MCF 10A (cell line): ENCODE measurements at regions of chr7 and their contacts with region 1.

Region 1: DNA sequence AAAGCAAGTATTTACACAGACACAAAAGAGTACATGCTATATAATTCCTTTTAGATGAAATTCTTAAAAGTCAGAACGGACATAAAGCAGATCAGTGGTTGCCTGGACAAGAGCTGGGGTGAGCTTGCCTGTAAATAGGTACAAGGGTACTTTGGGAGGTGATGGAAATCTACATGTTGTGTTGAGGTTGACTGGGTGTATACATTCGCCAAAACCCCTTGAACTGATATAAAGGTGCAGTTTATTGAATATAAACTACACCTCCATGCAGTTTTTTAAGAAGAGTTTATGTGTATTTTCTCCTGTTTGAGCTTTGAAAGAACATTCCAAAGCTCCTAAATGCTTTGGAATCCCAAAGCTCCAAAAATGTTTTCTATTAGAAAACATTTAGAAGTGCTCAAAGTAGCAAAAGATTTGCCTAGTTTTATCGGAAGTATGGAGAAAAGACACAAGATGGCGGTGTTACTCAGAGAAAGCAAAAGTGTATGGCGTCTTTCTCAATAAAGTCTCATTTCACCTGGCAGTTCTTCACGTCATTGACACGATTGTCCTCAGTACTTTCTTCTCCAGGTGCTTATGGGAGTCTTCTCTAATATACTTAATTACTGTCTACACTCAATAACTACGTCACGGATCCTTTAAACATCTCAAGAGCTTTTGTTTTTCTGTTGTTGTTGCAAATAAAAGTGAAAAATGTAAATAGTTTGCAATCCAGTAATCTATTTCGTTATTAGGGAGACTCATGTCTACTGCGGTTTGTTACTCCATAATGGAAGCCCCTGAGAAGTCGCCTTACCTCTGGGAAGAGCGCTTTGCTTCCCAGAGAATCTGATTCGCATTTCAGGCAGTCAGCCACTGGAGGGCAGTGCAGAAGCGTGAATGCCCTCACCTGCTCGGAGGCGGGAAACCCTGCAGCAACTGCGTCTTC is 14.7 kb upstream of the SEC61G start:
- DNase-seq: peak; percentile 90
- H3K4me3 Mint-ChIP-seq: peak overlapping the region; percentile 75
- H3K27ac Mint-ChIP-seq: peak overlapping the region; percentile 75
- H3K4me1 Mint-ChIP-seq: peaks cover 13% of the 10 kb centered on the region
- H3K27me3 Mint-ChIP-seq: no peaks in the 10 kb centered on the region
- CTCF ChIP-seq: peak; percentile 80

Region 2: DNA sequence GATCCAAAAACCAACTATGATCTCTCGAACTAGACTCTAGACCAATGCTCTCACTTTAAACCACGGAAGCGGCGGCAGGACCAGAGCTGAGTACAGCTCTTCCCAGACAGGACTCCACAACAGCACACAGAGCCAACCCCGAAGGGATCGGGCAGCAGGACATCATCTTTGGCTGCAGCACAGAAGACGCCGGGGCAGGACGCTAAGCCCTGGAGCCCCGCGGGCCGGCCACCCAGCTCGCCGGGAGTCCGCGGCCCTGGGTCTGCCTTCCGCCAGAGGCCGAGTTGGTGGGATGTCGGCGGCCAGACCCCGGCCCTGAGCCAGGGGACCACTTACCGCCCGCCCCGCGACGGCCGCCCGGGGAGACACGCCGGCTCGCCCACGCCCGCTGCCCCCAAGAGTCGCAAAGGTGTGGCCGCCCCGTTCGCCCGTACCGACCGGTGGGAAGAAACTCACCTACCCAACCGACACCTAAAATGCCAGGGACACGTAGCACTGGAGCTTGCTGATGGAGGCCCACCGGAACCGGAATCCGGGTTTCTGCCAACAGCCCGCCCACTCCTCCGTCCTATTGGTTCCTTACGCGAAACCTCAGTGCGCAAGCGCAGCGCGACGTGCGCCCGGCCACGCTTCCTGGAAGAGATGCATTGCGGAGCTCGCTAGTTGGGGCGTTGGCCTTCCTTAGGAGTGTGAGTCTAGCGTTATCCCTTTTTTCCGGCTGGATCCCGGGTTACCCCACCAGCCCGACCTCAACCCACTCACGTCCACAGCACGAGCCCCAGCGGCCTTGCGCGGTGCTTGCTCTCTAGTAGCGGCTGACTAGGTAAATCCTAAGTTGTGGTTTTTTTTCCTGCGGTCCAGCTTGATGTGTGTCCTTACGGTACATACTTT is 14.8 kb before region 1 on chr7 and contains the start of gene SEC61G:
- CTCF ChIA-PET with region 1: interaction called, 33 read pairs
- POLR2A ChIA-PET with region 1: interaction called, 12 read pairs
- intact Hi-C with region 1: no loop called
- DNase-seq: peak; percentile 97
- H3K4me3 Mint-ChIP-seq: peak within 1 kb of the TSS; percentile 94
- H3K27ac Mint-ChIP-seq: peak within 1 kb of the TSS; percentile 96
- H3K4me1 Mint-ChIP-seq: peaks cover 5% of the 10 kb centered on the region
- H3K27me3 Mint-ChIP-seq: no peaks in the 10 kb centered on the region
- CTCF ChIP-seq: no peak
- total RNA-seq, gene SEC61G: 246 and 490 TPM in 2 replicates

Region 3: DNA sequence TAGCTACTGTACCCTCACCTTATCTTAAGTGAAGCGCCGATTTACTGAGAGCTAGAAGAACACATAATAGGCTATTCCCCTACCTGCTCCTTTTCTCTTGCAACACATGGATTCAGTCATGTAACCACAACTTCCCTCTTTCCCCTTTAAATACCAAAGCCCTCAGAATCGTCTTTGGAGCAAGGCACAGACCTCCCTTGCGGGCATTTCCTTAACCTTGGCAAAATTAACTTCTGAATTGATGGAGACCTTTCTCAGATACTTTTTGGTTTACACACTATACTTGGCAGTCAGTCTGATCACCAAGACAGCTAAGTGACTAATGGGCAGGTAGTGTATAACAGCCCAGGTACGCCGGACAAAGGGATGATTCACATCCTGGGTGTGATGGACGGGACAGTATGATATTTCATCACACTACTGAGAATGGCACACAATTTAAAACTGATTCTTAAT is 57.9 kb after region 1 on chr7:
- CTCF ChIA-PET with region 1: interaction called, 90 read pairs
- POLR2A ChIA-PET with region 1: no interaction called
- intact Hi-C with region 1: loop called (anchors 2 kb)
- DNase-seq: peak; percentile 96
- H3K4me3 Mint-ChIP-seq: peak overlapping the region; percentile 28
- H3K27ac Mint-ChIP-seq: peak overlapping the region; percentile 61
- H3K4me1 Mint-ChIP-seq: peaks cover 21% of the 10 kb centered on the region
- H3K27me3 Mint-ChIP-seq: no peaks in the 10 kb centered on the region
- CTCF ChIP-seq: no peak

Region 4: DNA sequence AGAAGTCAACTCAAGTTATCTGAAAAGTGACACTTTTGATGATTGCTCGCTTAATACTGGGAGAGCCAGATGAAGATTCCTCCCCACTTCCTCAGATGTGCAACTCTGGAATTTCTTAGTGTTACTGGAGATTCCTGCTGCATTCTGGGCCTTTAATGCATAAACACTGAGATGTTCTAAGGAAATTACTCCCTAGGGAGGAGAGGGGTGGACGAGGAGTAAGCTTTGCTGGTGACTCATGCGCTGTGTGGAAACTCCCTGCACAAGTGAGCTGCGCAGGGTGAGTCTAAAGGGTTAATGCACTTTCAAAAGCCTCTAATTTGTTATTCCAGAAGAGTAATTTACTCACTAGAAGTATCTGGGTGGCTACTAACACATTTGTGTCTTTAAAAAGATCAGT is 291.3 kb after region 1 on chr7:
- CTCF ChIA-PET with region 1: interaction called, 9 read pairs
- POLR2A ChIA-PET with region 1: no interaction called
- intact Hi-C with region 1: loop called (anchors 5 kb)
- DNase-seq: peak; percentile 95
- H3K4me3 Mint-ChIP-seq: peak overlapping the region; percentile 63
- H3K27ac Mint-ChIP-seq: peak overlapping the region; percentile 93
- H3K4me1 Mint-ChIP-seq: peaks cover 81% of the 10 kb centered on the region
- H3K27me3 Mint-ChIP-seq: no peaks in the 10 kb centered on the region
- CTCF ChIP-seq: no peak

Region 5: GRCh38 chr7:55144333-55145317 is 370.9 kb after region 1 on chr7:
- CTCF ChIA-PET with region 1: interaction called, 21 read pairs
- POLR2A ChIA-PET with region 1: interaction called, 3 read pairs
- intact Hi-C with region 1: no loop called
- DNase-seq: no peak
- H3K4me3 Mint-ChIP-seq: no peak overlapping the region
- H3K27ac Mint-ChIP-seq: no peak overlapping the region
- H3K4me1 Mint-ChIP-seq: peaks cover 25% of the 10 kb centered on the region
- H3K27me3 Mint-ChIP-seq: no peaks in the 10 kb centered on the region
- CTCF ChIP-seq: peak; percentile 22

Region 6: GRCh38 chr7:55250313-55250712 is 476.6 kb after region 1 on chr7:
- CTCF ChIA-PET with region 1: interaction called, 309 read pairs
- POLR2A ChIA-PET with region 1: interaction called, 19 read pairs
- intact Hi-C with region 1: loop called (anchors 1 kb)
- DNase-seq: peak; percentile 66
- H3K4me3 Mint-ChIP-seq: no peak overlapping the region
- H3K27ac Mint-ChIP-seq: no peak overlapping the region
- H3K4me1 Mint-ChIP-seq: peaks cover 9% of the 10 kb centered on the region
- H3K27me3 Mint-ChIP-seq: peaks cover 12% of the 10 kb centered on the region
- CTCF ChIP-seq: peak; percentile 53

Region 7: DNA sequence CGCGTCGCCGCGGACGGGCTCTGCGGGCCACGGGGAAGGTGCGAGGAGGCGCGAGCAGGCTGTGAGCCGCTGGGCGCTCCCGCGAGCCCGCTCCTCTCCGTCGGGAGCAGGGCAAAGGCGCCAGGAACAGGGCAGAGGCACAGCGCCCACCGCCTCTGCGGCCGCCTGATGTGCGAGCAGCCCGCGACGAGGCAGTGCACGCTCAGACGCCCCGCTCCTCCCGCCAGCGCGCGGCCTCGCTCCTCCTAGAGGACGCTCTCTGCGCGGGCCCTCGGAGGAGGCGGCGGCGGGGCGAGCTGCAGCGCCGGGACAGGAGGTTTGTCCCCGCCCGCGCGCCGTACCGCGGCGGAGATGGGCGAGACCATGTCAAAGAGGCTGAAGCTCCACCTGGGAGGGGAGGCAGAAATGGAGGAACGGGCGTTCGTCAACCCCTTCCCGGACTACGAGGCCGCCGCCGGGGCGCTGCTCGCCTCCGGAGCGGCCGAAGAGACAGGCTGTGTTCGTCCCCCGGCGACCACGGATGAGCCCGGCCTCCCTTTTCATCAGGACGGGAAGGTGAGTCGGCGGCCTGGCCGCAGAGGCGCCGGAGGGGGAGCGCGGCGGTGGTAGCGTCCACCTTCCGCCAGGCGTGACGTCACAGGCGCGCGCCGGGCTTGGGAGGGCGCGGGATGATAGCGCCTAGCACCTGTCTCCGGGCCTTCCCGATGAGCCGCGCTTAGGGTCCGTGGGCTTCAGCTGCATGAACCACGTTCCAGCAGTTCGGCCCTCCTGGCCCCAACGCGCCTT is 592.1 kb after region 1 on chr7:
- CTCF ChIA-PET with region 1: no interaction called
- POLR2A ChIA-PET with region 1: no interaction called
- intact Hi-C with region 1: loop called (anchors 5 kb)
- DNase-seq: peak; percentile 96
- H3K4me3 Mint-ChIP-seq: peak overlapping the region; percentile 92
- H3K27ac Mint-ChIP-seq: peak overlapping the region; percentile 100
- H3K4me1 Mint-ChIP-seq: peaks cover 6% of the 10 kb centered on the region
- H3K27me3 Mint-ChIP-seq: no peaks in the 10 kb centered on the region
- CTCF ChIP-seq: peak; percentile 10